ENCODE measurements at regions of chr19 and their contacts with region 1.

Region 1: GRCh38 chr19:10408511-10409283 is 5.4 kb upstream of the CDC37 start:
- DNase-seq: peak; percentile 86
- H3K4me3 Mint-ChIP-seq: peak overlapping the region; percentile 30
- H3K27ac Mint-ChIP-seq: peak overlapping the region; percentile 87
- H3K4me1 Mint-ChIP-seq: peaks cover 73% of the 10 kb centered on the region
- H3K27me3 Mint-ChIP-seq: no peaks in the 10 kb centered on the region

Region 2: GRCh38 chr19:10461047-10461790 is 52.5 kb after region 1 on chr19:
- CTCF ChIA-PET with region 1: interaction called, 7 read pairs
- POLR2A ChIA-PET with region 1: no interaction called
- intact Hi-C with region 1: loop called (anchors 1 kb)
- DNase-seq: peak; percentile 97
- H3K4me3 Mint-ChIP-seq: no peak overlapping the region
- H3K27ac Mint-ChIP-seq: no peak overlapping the region
- H3K4me1 Mint-ChIP-seq: peaks cover 8% of the 10 kb centered on the region
- H3K27me3 Mint-ChIP-seq: no peaks in the 10 kb centered on the region

Region 3: DNA sequence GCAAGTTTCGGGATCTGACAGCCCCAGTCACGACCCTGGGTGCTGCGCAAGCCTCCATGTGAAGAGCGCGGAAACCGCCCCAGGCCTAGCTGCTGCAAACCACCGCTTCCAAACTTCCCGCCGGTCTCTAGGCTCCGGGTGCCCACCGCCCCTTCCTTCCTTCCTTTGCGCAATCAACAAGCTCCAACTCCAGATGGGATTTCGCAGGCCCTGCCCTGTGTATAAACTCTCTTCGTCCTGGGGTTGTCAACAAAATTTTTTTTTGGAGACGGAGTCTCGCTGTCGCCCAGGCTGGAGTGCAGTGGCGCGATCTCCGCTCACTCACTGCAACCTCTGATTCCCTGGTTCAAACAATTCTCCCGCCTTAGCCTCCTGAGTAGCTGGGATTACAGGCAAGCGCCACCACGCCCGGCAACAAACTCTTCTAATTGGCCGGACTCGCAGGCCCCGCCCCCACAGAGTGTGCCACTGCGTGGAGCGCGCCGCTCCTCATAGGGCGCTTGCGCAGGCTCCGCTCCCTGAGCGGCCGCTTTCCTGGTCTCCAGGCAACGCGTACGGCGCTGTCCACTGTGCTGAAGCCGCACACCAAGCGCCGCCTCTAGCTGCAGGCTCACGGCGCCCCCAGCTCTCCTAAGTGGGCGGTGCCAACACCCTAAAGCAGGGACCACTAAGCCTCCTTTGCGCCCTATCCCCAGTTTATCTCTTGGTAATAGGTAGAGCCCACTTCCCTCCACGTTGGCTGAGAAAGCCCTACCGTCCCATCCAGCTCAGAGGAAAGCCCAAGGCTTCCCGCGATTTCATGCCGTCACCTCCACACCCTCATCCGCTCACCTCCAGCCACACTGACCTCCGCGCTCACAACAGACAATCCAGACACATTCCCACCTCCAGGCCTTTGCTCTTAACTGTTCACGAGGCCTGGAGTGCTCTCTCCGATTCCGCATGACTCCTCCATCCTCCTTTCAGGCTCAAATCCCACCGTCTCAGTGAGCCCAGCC is 287.0 kb after region 1 on chr19:
- CTCF ChIA-PET with region 1: no interaction called
- POLR2A ChIA-PET with region 1: no interaction called
- intact Hi-C with region 1: no loop called
- DNase-seq: peak; percentile 94
- H3K4me3 Mint-ChIP-seq: peak overlapping the region; percentile 59
- H3K27ac Mint-ChIP-seq: no peak overlapping the region
- H3K4me1 Mint-ChIP-seq: peaks cover 15% of the 10 kb centered on the region
- H3K27me3 Mint-ChIP-seq: peaks cover 13% of the 10 kb centered on the region